ENCODE measurements at regions of chr14 and their contacts with region 1.

Region 1: DNA sequence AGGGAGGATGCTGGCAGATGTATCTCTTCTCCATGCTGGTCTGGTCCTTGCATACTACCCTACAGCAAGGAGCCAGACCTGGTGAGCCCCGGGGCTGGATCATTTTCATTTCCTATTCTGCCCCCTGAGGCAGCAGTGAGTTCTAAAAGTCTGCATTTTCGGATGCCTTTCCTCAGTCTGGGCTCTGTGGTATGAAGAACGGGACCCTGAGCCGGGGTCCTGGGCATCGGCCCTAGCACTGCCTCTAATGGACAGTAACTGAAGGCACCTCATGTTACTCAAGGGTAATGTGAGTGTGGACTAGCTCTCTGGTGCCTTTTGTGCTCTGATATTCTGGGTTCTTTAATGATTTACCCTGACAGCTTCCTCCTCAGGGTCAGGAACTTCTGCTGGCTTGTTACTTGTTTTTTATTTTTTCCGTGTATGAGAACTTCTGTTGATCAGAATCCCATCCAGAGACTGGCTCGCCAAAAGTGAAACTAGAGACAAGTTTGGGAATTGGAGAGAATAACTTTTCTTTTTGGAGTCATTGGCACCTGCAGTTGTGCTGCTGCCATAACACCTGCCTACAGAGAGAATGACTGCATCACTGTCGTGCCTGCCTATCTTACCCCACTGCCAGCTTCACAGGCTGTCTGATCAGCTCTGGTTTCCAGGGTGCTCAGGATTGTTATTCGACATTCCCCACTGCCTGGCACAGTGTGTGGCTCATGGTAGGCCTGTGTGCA is 62.3 kb downstream of the SUSD6 start:
- DNase-seq: no peak
- ATAC-seq: peak; percentile 52 to 66 (median 58)
- H3K4me3 ChIP-seq: no peak overlapping the region
- H3K27ac ChIP-seq: peak overlapping the region; percentile 34
- H3K4me1 ChIP-seq: peaks cover 72% of the 10 kb centered on the region
- H3K27me3 ChIP-seq: no peaks in the 10 kb centered on the region
- CTCF ChIP-seq: peak; percentile 4

Region 2: DNA sequence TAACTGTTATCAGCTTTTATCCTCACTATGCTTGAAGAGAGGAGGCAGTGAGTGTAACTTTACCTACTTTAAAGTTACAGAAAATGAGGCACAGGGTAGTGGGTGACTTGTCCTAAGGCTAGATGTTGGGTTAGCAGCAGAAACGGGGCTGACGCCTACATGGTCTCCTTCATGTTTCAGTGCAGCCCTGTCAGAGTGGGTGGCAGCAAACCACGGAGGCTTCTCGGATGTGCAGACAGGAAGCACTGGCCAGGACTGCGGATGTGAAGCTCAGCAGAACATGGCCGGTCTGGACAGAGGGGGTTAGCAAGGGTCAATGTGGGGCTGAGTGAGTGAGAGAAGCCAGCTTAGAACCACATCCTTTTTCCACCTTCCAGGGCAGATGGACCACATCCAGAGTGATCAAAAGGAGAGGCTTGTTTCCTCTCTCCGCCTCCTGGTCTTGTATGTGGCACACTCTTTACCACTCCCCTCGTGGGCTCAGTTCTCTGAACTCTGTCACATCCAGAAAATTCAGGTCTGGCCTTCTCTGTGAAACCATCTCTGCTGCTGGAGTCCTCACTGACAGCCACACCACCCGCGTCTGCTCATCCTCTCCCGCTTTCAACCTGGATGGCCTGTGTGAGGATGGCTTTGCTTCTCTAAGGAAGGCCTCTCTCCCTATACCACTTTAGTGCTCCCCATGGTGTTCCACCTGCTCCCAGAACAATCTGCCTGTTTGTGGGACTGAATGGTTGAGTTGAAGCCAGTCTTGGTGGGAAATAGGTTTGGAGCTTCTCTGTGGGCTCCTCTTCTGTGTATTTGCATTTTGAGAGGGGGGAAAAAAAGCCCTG is 48.2 kb before region 1 on chr14:
- intact Hi-C with region 1: loop called in 1 of 2 experiments (anchors 5 kb)
- DNase-seq: peak; percentile 52 to 76
- ATAC-seq: peak; percentile 42 to 70 (median 60)
- H3K4me3 ChIP-seq: no peak overlapping the region
- H3K27ac ChIP-seq: peak overlapping the region; percentile 38
- H3K4me1 ChIP-seq: peaks cover 71% of the 10 kb centered on the region
- H3K27me3 ChIP-seq: no peaks in the 10 kb centered on the region
- CTCF ChIP-seq: no peak

Region 3: GRCh38 chr14:69708586-69709174 is 34.9 kb after region 1 on chr14:
- intact Hi-C with region 1: no loop called
- DNase-seq: no peak
- ATAC-seq: peak in 1 of 4 donors; percentile 18
- H3K4me3 ChIP-seq: no peak overlapping the region
- H3K27ac ChIP-seq: no peak overlapping the region
- H3K4me1 ChIP-seq: peaks cover 31% of the 10 kb centered on the region
- H3K27me3 ChIP-seq: no peaks in the 10 kb centered on the region
- CTCF ChIP-seq: no peak